Activated naive CD4-positive, alpha-beta T cell treated with anti-CD3 and anti-CD28 coated beads for 36 hours (primary cell): ENCODE measurements at regions of chr3 and their contacts with region 1.

Region 1: DNA sequence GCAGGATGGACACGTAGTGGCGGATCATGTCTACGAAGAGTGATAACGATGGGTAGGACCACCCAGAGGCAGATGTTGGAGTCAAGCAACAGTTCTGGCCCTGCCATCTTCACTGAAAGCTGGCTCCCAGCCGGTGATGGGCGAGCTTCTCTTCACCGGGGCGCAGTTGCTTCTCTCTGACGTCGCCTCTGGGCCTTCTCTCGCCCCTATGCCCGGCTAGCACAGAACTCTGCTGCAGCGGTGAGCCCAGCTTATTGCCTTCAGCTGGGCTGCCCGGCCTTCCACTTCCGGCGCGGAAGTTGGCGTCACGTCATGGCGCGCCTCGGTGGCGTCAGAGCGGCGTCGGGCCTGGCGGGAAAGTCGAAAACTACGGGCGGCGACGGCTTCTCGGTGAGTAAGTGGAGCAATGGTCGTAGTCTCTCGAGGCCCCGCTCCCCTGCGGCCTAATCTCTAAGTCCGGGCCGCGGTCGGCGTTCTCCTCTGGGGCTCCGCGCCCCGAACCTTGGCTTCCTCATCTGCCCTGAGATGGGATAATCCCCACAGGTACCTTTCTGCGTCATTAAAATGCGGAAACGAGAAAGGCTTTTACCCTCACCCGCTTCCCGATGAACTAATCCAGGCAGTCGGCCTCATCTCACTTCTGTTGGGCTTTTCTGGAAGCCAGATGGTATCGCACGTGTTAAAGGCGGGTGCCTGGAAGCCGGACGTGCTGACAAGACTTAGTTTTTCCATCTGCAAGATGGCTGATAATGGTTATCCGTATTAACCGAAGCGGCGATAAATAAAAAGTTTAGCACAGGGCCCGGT is at the start of gene FANCD2:
- DNase-seq: peak; percentile 94
- H3K4me3 Mint-ChIP-seq: peak within 1 kb of the TSS; percentile 92
- H3K27ac Mint-ChIP-seq: peak within 1 kb of the TSS; percentile 98
- H3K4me1 Mint-ChIP-seq: peaks cover 22% of the 10 kb centered on the region
- H3K27me3 Mint-ChIP-seq: no peaks in the 10 kb centered on the region
- total RNA-seq, gene FANCD2: 86.3 to 90.8 TPM

Region 2: DNA sequence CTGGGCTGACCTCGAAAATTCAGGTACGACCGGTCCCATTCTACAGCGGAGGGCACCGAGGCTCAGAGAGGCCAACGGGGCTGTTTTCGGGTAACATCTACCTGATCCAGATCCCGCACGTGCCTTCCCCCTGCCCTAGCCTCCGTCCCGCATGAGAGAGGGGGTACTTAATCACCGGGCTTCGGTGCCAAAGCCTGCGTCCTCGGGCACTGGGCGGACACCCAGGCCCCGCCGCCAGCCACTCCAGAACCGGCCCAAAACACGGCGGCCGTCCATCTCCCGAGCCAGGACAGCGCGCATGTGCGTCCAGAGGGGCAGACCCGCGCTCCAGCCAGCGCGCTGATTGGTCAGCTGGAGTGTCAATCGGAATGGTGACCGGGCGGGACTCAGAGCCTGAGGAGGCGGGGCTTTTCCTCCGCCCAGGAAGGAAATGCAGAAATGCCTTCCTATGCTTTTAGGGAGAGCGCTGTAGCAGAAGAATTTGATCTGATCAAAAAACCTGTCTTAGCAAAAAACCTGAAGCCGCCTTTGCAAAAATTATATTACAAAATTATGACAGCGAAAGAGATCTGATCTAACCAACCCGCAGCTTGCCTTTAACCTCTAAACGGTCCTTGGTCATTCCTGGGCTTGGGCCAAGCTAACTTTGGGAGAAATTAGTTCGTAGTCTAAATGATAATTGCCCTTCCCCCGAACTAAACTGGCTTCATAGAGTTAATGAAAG is 182.4 kb before region 1 on chr3 and contains the start of gene RPUSD3:
- CTCF ChIA-PET with region 1: no interaction called
- intact Hi-C with region 1: loop called (anchors 5 kb)
- DNase-seq: peak; percentile 98
- H3K4me3 Mint-ChIP-seq: peak within 1 kb of the TSS; percentile 98
- H3K27ac Mint-ChIP-seq: peak within 1 kb of the TSS; percentile 89
- H3K4me1 Mint-ChIP-seq: peaks cover 30% of the 10 kb centered on the region
- H3K27me3 Mint-ChIP-seq: no peaks in the 10 kb centered on the region
- total RNA-seq, gene RPUSD3: 82.0 to 83.7 TPM

Region 3: DNA sequence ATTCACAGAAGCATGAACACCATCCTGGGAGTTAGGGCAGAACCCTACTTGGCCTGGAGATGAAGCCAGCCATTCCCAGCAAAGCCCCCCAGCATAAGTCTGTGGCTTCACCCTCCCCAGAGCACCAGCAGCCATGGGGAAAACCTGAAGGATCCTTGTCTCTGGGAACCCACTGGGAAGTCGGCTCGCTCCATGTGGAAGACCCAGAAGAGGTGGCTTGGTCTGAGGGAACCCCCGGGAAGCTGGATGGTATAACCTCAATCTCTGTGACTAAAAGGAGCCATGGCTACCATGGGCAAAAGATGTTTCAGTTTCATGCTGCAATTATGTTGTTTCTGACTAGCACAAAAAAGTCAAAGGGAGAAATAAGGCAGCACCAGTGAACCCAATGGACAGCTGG is 170.7 kb before region 1 on chr3:
- CTCF ChIA-PET with region 1: no interaction called
- intact Hi-C with region 1: no loop called
- DNase-seq: no peak
- H3K4me3 Mint-ChIP-seq: no peak overlapping the region
- H3K27ac Mint-ChIP-seq: no peak overlapping the region
- H3K4me1 Mint-ChIP-seq: no peaks in the 10 kb centered on the region
- H3K27me3 Mint-ChIP-seq: peaks cover 2% of the 10 kb centered on the region

Region 4: GRCh38 chr3:9986237-9986725 is 40.0 kb before region 1 on chr3:
- CTCF ChIA-PET with region 1: interaction called, 3 read pairs
- intact Hi-C with region 1: loop called (anchors 1 kb)
- DNase-seq: no peak
- H3K4me3 Mint-ChIP-seq: peak overlapping the region; percentile 97
- H3K27ac Mint-ChIP-seq: peak overlapping the region; percentile 99
- H3K4me1 Mint-ChIP-seq: peaks cover 39% of the 10 kb centered on the region
- H3K27me3 Mint-ChIP-seq: no peaks in the 10 kb centered on the region

Region 5: DNA sequence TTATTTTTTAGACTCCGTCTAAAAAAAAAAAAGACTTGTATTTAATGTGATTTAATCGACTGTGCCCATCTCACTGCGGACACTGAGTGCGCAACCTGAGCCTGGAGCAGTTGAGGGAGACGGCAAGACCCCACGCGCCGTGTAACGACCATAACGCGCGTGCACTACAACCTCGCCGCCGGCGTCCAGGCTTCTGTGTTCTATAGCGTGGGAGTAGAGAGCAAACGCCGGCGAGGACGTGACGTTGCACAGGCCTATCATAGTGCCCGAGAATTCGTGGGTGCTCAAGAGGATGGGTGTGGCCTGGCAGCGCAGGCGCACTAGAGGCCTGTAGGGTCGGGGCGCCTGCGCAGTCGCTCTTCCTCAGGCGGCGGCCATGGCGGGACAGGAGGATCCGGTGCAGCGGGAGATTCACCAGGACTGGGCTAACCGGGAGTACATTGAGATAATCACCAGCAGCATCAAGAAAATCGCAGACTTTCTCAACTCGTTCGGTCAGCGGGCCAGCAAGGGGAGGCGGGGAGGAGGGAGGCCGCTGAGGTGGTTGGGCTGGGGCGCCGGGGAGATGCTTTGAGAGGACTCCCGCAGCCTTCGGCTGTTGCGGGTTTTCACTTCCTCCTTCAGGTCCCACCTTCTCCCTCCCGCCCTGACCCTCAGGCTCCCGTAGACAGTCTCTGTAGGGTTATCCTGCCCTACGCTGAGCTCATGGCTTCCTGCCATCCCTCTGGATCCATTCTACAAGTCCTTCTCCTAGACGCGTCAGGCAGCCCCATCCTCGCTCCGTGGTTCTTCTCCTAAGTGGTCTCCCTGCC is 89.2 kb after region 1 on chr3 and contains the start of gene BRK1:
- CTCF ChIA-PET with region 1: no interaction called
- intact Hi-C with region 1: loop called (anchors 1 kb)
- DNase-seq: peak; percentile 97
- H3K4me3 Mint-ChIP-seq: peak within 1 kb of the TSS; percentile 92
- H3K27ac Mint-ChIP-seq: peak within 1 kb of the TSS; percentile 94
- H3K4me1 Mint-ChIP-seq: peaks cover 31% of the 10 kb centered on the region
- H3K27me3 Mint-ChIP-seq: no peaks in the 10 kb centered on the region
- total RNA-seq, gene BRK1: 73.6 to 73.7 TPM

Region 6: GRCh38 chr3:10263646-10264363 is 237.5 kb after region 1 on chr3:
- CTCF ChIA-PET with region 1: no interaction called
- intact Hi-C with region 1: loop called (anchors 5 kb)
- DNase-seq: peak; percentile 81
- H3K4me3 Mint-ChIP-seq: peak overlapping the region; percentile 71
- H3K27ac Mint-ChIP-seq: peak overlapping the region; percentile 88
- H3K4me1 Mint-ChIP-seq: peaks cover 81% of the 10 kb centered on the region
- H3K27me3 Mint-ChIP-seq: no peaks in the 10 kb centered on the region

Region 7: GRCh38 chr3:10322352-10322710 is 296.0 kb after region 1 on chr3:
- CTCF ChIA-PET with region 1: no interaction called
- intact Hi-C with region 1: loop called (anchors 1 kb)
- DNase-seq: peak; percentile 29
- H3K4me3 Mint-ChIP-seq: no peak overlapping the region
- H3K27ac Mint-ChIP-seq: no peak overlapping the region
- H3K4me1 Mint-ChIP-seq: peaks cover 23% of the 10 kb centered on the region
- H3K27me3 Mint-ChIP-seq: peaks cover 1% of the 10 kb centered on the region